Esophagus squamous epithelium (tissue), 5 donors: ENCODE measurements at regions of chr22 and their contacts with region 1.

Region 1: GRCh38 chr22:43346521-43346929 is 3.4 kb upstream of the SCUBE1 start:
- DNase-seq: no peak
- H3K4me3 ChIP-seq: no peak overlapping the region
- H3K27ac ChIP-seq: no peak overlapping the region
- H3K4me1 ChIP-seq: peaks cover 4 to 33% (median 15%) of the 10 kb centered on the region in 3 donors
- H3K27me3 ChIP-seq: peaks cover 0 to 95% (median 15%) of the 10 kb centered on the region in 4 donors
- CTCF ChIP-seq: peak; percentile 35 to 64 (median 58)
- POLR2A ChIP-seq: no peak

Region 2: GRCh38 chr22:43230971-43231723 is 115.4 kb before region 1 on chr22:
- intact Hi-C with region 1: loop called (anchors 10 kb)
- DNase-seq: no peak
- H3K4me3 ChIP-seq: no peak overlapping the region
- H3K27ac ChIP-seq: no peak overlapping the region
- H3K4me1 ChIP-seq: peaks cover 0 to 16% (median 0%) of the 10 kb centered on the region in 3 donors
- H3K27me3 ChIP-seq: peaks cover 0 to 23% (median 0%) of the 10 kb centered on the region in 4 donors
- CTCF ChIP-seq: peak; percentile 61 to 85 (median 80)
- POLR2A ChIP-seq: no peak

Region 3: GRCh38 chr22:43289976-43290721 is 56.4 kb before region 1 on chr22:
- intact Hi-C with region 1: loop called (anchors 5 kb)
- DNase-seq: no peak
- H3K4me3 ChIP-seq: peak overlapping the region in 2 of 4 donors; percentile 0 to 48
- H3K27ac ChIP-seq: peak overlapping the region; percentile 19 to 66 (median 46)
- H3K4me1 ChIP-seq: peaks cover 11 to 64% (median 47%) of the 10 kb centered on the region in 3 donors
- H3K27me3 ChIP-seq: peaks cover 0 to 7% (median 0%) of the 10 kb centered on the region in 4 donors
- CTCF ChIP-seq: no peak
- POLR2A ChIP-seq: no peak

Region 4: DNA sequence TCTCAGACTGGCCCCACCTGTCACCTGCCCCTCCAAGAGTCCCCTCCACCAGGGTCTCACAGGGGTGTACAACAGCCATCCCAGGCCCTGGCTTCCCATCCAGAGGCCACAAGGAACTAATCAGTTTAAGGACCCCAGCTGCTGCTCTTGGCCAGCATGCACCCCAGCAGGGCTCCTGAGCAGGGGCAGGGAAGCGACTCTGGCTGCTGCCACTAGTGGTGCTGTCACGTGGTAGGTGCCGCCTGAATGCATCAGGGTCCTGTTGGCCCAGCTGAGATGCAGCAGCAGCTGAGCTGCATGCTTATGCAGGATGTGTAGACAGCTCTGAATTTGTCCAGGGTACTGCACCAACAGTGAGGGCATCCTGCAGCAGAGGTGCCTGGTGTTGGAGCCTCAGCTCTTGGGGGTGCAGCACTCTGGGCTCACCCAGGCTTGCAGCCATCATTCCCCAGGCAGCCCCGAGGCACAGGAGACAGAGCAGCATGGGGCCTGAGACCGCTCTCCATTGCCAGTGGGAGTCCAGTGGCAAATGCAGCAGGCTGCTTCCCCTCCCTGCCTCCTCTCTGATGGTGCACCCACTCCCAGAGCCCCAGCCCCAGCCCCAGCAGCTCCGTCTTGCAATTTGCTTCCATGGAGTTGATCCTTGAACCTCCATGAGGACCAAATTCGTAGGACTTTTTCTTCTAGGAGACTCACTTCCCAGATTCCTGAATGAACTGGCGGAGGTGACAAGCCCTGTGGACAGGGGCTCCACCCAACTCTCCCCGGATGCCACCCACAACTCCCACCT is 164.0 kb after region 1 on chr22:
- intact Hi-C with region 1: no loop called
- DNase-seq: no peak
- H3K4me3 ChIP-seq: no peak overlapping the region
- H3K27ac ChIP-seq: no peak overlapping the region
- H3K4me1 ChIP-seq: no peaks in the 10 kb centered on the region
- H3K27me3 ChIP-seq: peaks cover 0 to 18% (median 0%) of the 10 kb centered on the region in 4 donors
- CTCF ChIP-seq: no peak
- POLR2A ChIP-seq: no peak

Region 5: GRCh38 chr22:43743131-43743530 is 396.6 kb after region 1 on chr22:
- intact Hi-C with region 1: no loop called
- DNase-seq: no peak
- H3K4me3 ChIP-seq: no peak overlapping the region
- H3K27ac ChIP-seq: no peak overlapping the region
- H3K4me1 ChIP-seq: peaks cover 0 to 11% (median 0%) of the 10 kb centered on the region in 3 donors
- H3K27me3 ChIP-seq: peaks cover 0 to 12% (median 0%) of the 10 kb centered on the region in 4 donors
- CTCF ChIP-seq: no peak
- POLR2A ChIP-seq: no peak